Cardiac septum (tissue), 1 donor: ENCODE measurements at regions of chr1 and their contacts with region 1.

Region 1: DNA sequence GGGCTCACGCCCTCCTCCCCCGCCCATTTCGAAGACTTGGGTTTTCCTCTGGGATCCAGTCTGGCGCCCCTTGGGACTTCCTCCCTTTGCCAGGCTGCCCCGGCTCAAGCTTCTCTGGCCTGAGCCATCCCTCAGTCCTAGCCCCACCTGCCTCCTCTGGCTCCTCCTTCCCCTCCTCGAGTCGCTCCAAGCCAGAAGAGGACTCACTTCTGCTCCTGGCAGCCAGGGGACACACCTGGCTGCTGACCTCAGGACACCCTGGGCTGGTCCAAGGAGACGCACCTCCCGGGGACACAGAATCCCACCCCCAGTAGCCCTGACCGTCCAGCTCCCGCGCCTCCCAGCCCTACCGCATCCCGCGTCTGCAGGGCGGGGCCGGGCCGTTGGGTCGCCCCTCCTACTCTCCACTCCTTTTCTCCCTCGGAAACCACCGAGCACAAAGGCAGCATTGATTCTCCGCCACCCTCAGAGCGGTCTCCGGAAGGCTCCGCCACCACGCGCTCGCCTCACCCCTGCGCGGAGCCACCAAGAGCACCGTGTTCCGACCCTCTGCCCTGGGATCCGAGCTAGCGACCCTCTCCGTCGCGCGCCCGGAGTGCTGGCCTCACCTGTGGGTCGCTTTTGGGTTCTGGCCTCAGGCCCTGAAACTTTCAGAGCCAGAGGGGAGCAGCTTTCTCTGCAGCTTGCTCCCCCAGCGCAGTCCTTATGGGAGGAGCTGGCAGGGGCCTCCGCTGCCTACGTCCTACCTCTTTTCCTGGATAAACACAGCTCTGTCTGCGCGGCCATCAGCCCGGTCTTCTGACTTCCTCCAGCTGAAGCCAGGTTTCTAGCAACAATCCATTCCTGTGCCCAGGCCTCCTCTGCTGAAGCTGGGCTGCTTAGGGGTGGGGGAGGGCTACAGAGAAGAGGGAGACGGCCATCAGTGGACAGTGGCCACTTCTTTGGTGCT is at the start of gene C2CD4D:
- DNase-seq: no peak
- total RNA-seq, gene C2CD4D: not detected

Region 2: DNA sequence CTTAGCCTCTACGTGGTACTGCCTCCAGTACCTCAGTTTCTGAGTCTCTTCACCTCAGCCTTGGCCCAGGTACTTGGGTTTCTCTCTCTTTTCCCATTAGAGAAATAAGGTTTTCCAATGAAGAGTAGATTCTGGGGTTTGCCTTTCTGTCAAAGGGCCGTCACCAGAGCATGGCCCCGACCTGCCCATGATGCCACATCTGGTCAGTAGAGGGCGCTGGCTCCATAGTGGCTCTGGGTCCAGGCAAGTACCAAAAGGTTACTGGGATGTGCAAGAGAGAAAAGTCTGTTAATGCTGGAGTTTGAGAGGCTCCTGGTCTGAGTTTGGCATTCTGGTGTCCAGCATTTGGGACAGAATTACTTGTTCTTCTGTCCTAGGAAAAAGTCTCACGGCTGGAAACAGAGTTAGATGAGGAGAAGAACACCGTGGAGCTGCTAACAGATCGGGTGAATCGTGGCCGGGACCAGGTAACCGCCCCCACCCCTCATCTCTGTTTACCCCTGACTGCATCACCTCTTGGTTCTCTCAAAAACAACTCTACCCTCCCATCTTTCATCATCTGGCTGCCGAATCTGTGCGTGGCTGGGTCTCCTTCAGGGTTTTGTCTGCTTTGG is 305.0 kb before region 1 on chr1:
- intact Hi-C with region 1: loop called (anchors 5 kb)
- DNase-seq: peak; percentile 91

Region 3: GRCh38 chr1:151594143-151594625 is 245.5 kb before region 1 on chr1:
- intact Hi-C with region 1: loop called (anchors 5 kb)
- DNase-seq: peak; percentile 91